Head of caudate nucleus (tissue), 42 donors: ENCODE measurements at regions of chr11 and their contacts with region 1.

Region 1: DNA sequence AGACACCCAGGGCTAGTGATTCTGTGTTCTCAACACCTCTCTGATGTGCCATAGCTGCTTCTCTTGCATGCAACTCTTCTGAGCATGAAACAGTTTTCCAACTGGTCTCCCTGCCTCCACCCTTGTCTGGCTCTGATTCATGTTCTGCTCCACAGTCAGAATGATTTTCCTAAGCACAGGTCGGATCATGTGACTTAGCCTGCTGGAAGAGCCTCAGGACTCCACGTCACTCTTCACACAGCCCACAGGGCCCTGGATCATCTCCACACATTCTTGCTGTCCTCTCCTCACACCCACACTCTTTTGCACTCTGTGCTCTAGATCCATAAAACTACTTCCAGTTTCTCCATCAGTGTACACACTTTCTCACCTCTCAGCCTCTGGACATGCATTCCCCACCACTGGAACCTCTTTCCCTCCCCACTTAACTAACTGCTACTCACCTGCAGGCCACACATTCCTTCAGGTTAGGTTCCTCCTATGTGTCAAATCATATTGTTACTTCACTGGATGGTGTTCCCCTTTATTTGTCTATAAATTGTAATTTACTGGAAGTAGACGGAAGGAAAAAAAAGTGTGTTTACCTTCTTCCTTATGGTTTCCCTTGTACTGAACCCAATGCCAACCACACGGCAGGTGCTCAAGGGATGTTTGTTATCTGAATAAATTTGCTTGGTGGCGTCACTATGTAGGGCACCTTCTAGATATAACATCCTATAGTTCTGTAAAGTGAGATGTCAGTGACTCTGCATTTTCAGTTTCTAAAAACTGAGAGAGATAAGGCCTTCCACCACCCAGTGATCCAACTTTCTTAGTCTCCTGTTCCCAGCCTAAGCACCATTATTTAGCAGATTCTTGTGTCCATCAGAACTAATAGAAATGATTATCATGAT is 133.7 kb downstream of the ETS1 start:
- DNase-seq: peak in 1 of 42 donors; percentile 13

Region 2: GRCh38 chr11:128164080-128164741 is 289.5 kb before region 1 on chr11:
- intact Hi-C with region 1: loop called (anchors 10 kb)
- DNase-seq: no peak

Region 3: DNA sequence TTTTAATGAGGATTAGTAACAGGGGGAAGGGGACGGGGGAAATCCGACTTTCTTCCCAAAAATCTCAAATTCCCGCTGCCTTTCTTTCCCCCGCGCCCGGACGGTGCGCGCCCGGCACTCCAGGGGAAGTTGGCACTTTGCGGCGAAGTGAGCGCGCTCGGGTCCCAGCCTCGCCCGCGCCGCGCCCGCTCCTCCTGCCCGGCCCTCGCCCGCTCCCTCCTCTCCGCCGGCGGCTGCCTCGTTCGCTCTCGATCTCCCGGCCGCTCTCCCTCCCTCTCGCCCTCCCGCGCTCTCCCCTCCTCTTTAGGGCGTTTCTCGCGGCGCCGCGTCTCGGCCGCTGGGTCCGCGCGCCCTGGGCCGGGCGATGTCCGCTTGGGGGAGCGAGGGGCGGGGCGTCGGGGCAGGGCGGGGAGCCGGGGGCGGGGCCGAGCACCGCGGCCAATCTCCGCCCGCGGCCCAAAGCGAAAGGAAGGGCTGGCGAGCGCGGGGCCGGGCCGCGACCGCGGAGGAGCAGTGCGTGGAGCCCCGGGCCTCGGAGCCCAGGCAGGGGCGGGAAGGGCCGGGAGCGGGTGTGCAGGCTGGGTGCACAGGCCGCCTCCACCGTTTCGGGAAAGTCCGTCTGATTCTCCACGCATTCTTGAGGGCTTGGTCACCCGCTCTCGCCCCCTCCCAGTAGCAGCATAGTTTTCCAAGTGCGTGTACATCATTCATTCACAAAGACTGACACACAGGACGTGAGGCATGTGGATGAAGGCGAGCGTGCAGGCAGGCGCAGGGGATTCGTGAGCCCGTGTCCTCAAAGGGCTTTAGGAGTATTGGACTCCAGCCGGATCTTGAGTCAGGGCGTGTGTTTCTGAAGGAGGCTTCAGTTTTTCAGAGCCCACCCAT is 68.6 kb after region 1 on chr11:
- intact Hi-C with region 1: loop called (anchors 10 kb)
- DNase-seq: peak; percentile 69 to 96 (median 91)

Region 4: GRCh38 chr11:128552783-128553661 is 99.3 kb after region 1 on chr11:
- intact Hi-C with region 1: loop called (anchors 2 kb)
- DNase-seq: peak; percentile 16 to 92 (median 74)